Aorta (tissue), 5 donors: ENCODE measurements at regions of chr5 and their contacts with region 1.

Region 1: GRCh38 chr5:62403434-62404250 is at the start of gene DIMT1:
- DNase-seq: peak; percentile 97 to 98
- ATAC-seq: peak; percentile 100
- H3K4me3 ChIP-seq: peak within 1 kb of the TSS; percentile 31 to 98
- H3K27ac ChIP-seq: peak within 1 kb of the TSS; percentile 60 to 87
- H3K4me1 ChIP-seq: no peaks in the 10 kb centered on the region
- H3K27me3 ChIP-seq: no peaks in the 10 kb centered on the region
- total RNA-seq, gene DIMT1: 23.1 to 25.5 TPM

Region 2: DNA sequence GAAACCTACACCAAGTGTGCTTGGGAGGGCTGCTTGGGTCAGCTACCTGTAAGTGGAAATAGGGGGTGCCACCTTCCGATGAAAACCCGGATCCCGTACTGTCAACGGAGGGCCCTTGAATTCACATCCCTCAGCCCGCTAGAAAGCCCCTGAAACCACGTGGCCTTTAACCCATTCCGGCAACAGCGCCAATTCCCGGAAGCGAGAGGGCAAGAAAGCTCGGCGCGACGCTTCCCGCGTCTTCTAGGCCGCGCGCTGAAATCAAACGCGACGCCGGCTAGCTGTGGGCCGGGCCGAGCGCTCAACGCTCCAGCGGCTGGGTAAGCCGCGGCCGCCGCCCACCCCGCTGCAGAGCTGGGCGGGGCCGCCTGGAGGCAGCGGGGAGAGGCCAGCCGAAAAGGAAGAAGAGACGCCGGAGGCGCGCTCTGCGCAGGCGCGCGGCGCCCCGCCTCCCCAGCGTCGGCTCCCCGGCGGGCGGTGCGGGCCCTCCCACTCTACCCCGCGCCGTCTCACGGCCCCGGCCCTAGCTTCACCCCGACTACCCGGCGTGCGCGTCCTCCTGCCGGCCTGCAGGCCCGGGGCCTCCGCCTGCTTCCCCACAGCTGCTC is 97.8 kb before region 1 on chr5 and contains the start of gene KIF2A:
- intact Hi-C with region 1: loop called in 1 of 2 experiments (anchors 10 kb)
- DNase-seq: peak; percentile 93 to 96
- ATAC-seq: peak; percentile 97
- H3K4me3 ChIP-seq: peak within 1 kb of the TSS; percentile 93 to 99
- H3K27ac ChIP-seq: peak within 1 kb of the TSS in 1 of 2 donors; percentile 60
- H3K4me1 ChIP-seq: no peaks in the 10 kb centered on the region
- H3K27me3 ChIP-seq: no peaks in the 10 kb centered on the region
- total RNA-seq, gene KIF2A: 25.5 to 33.9 TPM